Psoas muscle (tissue), 8 donors: ENCODE measurements at regions of chr3 and their contacts with region 1.

Region 1: GRCh38 chr3:2311022-2311421 is 212.4 kb downstream of the CNTN4 start:
- DNase-seq: no peak
- ATAC-seq: no peak
- H3K4me3 ChIP-seq: no peak overlapping the region
- H3K27ac ChIP-seq: no peak overlapping the region
- H3K4me1 ChIP-seq: no peaks in the 10 kb centered on the region
- H3K27me3 ChIP-seq: no peaks in the 10 kb centered on the region
- CTCF ChIP-seq: no peak

Region 2: GRCh38 chr3:2283818-2284217 is 27.2 kb before region 1 on chr3:
- intact Hi-C with region 1: loop called in 1 of 2 experiments (anchors 1 kb)
- DNase-seq: no peak
- ATAC-seq: no peak
- H3K4me3 ChIP-seq: no peak overlapping the region
- H3K27ac ChIP-seq: no peak overlapping the region
- H3K4me1 ChIP-seq: no peaks in the 10 kb centered on the region
- H3K27me3 ChIP-seq: no peaks in the 10 kb centered on the region
- CTCF ChIP-seq: no peak